RWPE1 (cell line): ENCODE measurements at regions of chr5 and their contacts with region 1.

Region 1: DNA sequence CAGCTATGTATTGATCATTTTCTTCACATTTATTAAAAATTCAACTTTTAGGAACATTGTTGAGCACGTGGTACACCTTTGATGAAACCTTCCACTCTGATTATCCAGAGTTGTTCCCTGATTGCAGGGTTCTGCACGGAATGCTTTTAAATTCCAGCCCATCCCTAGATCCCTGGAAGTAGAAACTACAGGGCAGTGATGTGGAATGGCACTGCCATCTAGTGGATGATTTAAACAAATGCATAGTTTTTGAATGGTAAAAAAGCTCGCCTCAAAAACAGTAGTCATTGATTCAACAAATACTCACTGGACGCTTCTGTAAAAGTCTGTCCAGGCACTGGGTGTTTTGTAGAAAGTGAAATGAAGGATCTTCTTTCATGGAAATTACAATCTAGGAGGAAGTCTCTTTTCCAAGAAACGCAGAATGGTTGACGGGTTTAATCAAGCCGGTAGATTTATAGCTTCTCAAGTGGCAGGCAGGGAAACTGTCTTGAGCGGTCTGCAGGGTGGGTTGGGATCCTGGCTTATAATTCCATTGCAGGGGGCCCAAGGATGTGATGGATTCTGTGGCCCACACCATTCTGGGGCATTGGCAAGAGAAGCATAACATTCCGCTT is 118.4 kb downstream of the ARHGAP26 start:
- DNase-seq: peak; percentile 79
- H3K27ac ChIP-seq: no peak overlapping the region
- CTCF ChIP-seq: peak; percentile 90

Region 2: DNA sequence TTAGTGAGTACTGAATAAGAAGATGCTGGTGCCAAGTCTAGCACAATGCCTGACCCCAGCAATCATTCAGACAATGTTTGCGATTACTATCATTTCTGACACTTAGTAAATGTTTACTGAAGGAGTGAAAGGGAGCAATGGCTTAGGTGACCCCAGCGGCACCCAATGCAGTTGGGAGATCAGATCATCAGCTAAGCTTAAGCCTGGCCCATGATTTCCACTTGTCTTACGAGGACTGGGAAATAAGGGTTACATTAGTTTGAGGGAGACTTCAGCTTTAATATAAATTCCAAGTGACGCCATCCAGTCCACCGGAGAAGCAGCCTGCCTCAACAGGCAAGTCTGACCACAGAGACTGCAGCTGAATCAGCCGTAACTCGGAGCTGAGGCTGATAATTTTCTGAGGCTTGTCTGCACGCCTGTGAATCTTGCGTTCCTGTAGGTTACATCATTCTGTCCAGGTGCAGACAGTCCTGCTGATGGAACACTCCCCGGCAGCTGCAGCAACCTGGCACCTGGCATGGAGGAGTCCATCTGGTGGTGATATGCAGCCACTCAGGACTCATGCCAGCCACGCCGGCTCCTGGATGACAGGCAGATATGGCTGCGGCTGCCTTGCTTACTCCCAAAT is 167.8 kb before region 1 on chr5:
- CTCF ChIA-PET with region 1: interaction called, 88 read pairs
- POLR2A ChIA-PET with region 1: no interaction called
- DNase-seq: peak; percentile 96
- H3K27ac ChIP-seq: peak overlapping the region; percentile 94
- CTCF ChIP-seq: no peak; the same call in 1 of the 2 replicates

Region 3: GRCh38 chr5:142748568-142749249 is 139.9 kb before region 1 on chr5:
- CTCF ChIA-PET with region 1: interaction called, 29 read pairs
- POLR2A ChIA-PET with region 1: no interaction called
- DNase-seq: peak; percentile 51
- H3K27ac ChIP-seq: no peak overlapping the region
- CTCF ChIP-seq: no peak; the same call in 1 of the 2 replicates

Region 4: DNA sequence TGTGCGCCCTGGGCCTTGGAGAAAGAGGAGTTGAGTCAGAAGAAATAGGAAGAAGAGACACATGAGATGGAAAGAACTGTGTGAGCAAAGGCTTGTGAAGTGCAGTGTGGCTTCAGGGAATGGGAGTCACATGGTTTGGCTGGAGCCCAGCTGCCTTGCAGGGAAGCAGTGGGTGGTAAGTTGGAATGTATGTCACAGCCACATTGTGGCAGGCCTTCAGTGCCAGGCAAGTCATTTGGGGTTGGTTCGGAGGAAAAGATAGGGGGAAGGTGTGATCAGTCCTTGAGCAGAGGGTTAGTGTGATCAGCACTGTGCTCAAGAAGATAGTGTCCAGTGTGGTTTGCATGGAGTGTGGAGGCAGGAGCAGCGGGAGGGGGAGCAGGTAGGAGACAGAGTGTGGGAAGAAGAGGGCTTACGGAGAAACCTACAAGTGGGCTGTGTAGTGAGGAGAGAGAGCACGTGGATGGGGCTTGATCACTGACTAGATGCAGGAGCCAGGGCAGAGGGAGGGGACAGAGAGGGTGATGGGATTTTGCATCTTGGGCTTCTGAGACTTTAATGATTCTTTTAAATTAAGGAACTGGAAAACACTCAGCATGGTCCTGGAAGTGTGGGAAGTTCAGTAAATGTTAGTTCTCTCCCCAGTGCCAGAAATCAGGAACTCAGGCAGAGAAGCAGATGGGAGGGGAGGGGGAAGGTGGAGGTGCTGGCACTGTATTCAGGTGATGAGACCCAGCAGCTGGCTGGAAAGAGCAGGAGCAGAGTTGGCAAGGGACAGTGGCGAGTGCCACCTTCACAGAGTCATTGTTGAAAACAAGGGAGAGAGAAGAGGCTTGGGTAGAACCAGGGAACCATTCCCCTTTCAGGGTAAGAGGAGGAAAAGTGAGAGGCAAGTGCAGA is 71.8 kb before region 1 on chr5:
- CTCF ChIA-PET with region 1: no interaction called
- POLR2A ChIA-PET with region 1: no interaction called
- DNase-seq: no peak
- H3K27ac ChIP-seq: peak overlapping the region; percentile 49
- CTCF ChIP-seq: no peak

Region 5: GRCh38 chr5:142874537-142874936 is 14.0 kb before region 1 on chr5:
- CTCF ChIA-PET with region 1: interaction called, 32 read pairs
- POLR2A ChIA-PET with region 1: no interaction called
- DNase-seq: peak; percentile 68
- H3K27ac ChIP-seq: peak overlapping the region; percentile 61
- CTCF ChIP-seq: no peak

Region 6: DNA sequence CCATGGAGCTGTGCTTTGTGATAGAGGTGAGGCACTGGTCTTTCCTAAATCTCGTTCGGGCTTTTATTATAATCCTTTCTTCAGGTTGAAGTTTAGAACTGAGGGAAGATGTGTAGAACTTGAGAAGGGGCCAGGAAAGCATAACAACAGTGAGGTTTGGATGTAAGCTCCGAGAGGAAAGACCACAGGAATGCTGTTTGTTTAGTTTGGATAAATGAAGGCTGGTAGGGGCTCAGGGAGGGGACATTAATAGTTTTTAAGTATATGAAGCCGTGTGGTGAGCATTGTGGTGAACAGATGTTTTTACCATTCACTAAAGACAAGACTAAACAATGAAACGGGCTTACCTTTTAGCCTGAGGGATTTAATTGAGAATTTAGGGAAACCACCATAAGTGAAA is 12.3 kb after region 1 on chr5:
- CTCF ChIA-PET with region 1: interaction called, 10 read pairs
- POLR2A ChIA-PET with region 1: no interaction called
- DNase-seq: peak; percentile 45
- H3K27ac ChIP-seq: no peak overlapping the region
- CTCF ChIP-seq: no peak

Region 7: GRCh38 chr5:142977363-142978051 is 88.9 kb after region 1 on chr5:
- CTCF ChIA-PET with region 1: no interaction called
- POLR2A ChIA-PET with region 1: no interaction called
- DNase-seq: peak; percentile 81
- H3K27ac ChIP-seq: peak overlapping the region; percentile 62
- CTCF ChIP-seq: no peak

Region 8: GRCh38 chr5:143105216-143105905 is 216.8 kb after region 1 on chr5:
- CTCF ChIA-PET with region 1: no interaction called
- POLR2A ChIA-PET with region 1: no interaction called
- DNase-seq: no peak
- H3K27ac ChIP-seq: no peak overlapping the region
- CTCF ChIP-seq: no peak